Activated B cell treated with CpG ODN at 0.5 μM for 24 hours (primary cell): ENCODE measurements at regions of chr17 and their contacts with region 1.

Region 1: GRCh38 chr17:59746849-59747445 is 39.5 kb downstream of the VMP1 start:
- DNase-seq: no peak
- ATAC-seq: peak; percentile 62
- H3K4me3 Mint-ChIP-seq: no peak overlapping the region
- H3K27ac Mint-ChIP-seq: no peak overlapping the region
- H3K4me1 Mint-ChIP-seq: peaks cover 6% of the 10 kb centered on the region
- H3K27me3 Mint-ChIP-seq: no peaks in the 10 kb centered on the region
- CTCF ChIP-seq: no peak

Region 2: GRCh38 chr17:59804901-59805465 is 58.0 kb after region 1 on chr17:
- CTCF ChIA-PET with region 1: no interaction called
- POLR2A ChIA-PET with region 1: interaction called, 10 read pairs
- intact Hi-C with region 1: no loop called
- DNase-seq: no peak
- ATAC-seq: no peak
- H3K4me3 Mint-ChIP-seq: peak overlapping the region; percentile 71
- H3K27ac Mint-ChIP-seq: peak overlapping the region; percentile 76
- H3K4me1 Mint-ChIP-seq: peaks cover 11% of the 10 kb centered on the region
- H3K27me3 Mint-ChIP-seq: no peaks in the 10 kb centered on the region
- CTCF ChIP-seq: no peak

Region 3: DNA sequence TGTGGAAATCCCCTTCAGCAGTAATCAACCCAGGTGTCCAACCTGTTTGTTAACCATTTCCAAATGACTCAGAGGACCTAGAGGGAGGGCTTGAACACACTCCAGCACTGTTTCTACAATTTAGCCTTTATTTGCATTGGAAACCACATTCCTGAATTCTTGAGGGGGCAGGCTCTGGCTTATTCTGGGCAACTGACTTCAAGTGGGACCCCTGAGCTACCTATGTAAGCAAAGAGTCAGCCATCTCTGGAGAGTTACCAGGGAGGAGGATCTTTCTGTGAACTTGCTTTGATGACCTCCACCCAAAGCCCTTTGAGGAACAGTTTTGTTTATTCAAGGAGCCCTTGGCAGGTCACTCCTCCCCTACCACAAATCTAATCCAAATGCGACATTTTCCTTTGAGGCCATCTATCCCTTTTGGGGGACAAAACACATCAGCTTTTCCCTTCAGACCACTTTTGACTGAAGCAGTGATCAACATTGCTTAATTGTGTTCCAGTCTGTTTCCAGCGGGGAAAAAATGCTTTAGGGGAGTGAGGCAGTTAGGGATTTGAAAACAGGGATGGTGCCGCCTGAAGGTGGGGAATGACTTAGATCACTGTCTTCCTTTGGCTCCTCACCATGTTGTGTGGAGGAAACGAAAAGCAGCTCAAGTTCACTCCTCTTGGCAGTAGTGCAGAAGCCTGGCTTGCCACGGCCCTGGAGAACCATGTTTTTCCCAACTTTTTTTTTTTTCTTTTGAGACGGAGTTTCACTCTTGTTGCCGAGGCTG is 99.6 kb after region 1 on chr17:
- CTCF ChIA-PET with region 1: interaction called, 53 read pairs
- POLR2A ChIA-PET with region 1: interaction called, 137 read pairs
- intact Hi-C with region 1: no loop called
- DNase-seq: peak; percentile 33
- ATAC-seq: peak; percentile 67
- H3K4me3 Mint-ChIP-seq: peak overlapping the region; percentile 50
- H3K27ac Mint-ChIP-seq: peak overlapping the region; percentile 92
- H3K4me1 Mint-ChIP-seq: peaks cover 75% of the 10 kb centered on the region
- H3K27me3 Mint-ChIP-seq: no peaks in the 10 kb centered on the region
- CTCF ChIP-seq: no peak

Region 4: GRCh38 chr17:59899103-59899502 is 152.2 kb after region 1 on chr17:
- CTCF ChIA-PET with region 1: interaction called, 4 read pairs
- POLR2A ChIA-PET with region 1: interaction called, 7 read pairs
- intact Hi-C with region 1: loop called (anchors 2 kb)
- DNase-seq: no peak
- ATAC-seq: peak; percentile 92
- H3K4me3 Mint-ChIP-seq: no peak overlapping the region
- H3K27ac Mint-ChIP-seq: no peak overlapping the region
- H3K4me1 Mint-ChIP-seq: peaks cover 27% of the 10 kb centered on the region
- H3K27me3 Mint-ChIP-seq: no peaks in the 10 kb centered on the region
- CTCF ChIP-seq: no peak